WTC11 (cell line): ENCODE measurements at regions of chr11 and their contacts with region 1.

Region 1: GRCh38 chr11:57249384-57250319 is 12.6 kb upstream of the APLNR start:
- DNase-seq: peak; percentile 74
- ATAC-seq: peak; percentile 15; the same call in 1 of the 2 replicates
- H3K4me3 Mint-ChIP-seq: no peak overlapping the region
- H3K27ac Mint-ChIP-seq: no peak overlapping the region
- H3K4me1 Mint-ChIP-seq: no peaks in the 10 kb centered on the region; the same call in 1 of the 2 replicates
- H3K27me3 Mint-ChIP-seq: no peaks in the 10 kb centered on the region
- CTCF ChIP-seq: peak; percentile 85

Region 2: DNA sequence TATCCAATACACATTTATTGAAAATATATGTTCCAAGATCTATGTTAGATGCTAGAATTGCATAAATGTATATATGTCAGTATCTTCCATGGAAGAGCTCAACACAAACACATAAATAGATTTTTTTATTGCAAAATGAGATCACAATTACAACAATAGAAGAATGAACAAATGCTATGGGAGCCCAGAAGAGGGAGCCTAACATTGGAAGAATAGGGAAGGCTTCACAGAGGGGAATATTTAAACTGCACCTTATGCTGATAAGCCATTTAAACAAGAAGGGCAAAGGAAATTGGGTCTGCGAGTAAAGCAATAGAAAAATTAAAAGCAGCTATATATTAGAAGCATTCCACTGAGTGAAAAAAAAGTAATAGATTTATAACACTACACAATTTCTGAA is 164.0 kb before region 1 on chr11:
- CTCF ChIA-PET with region 1: interaction called, 15 read pairs
- POLR2A ChIA-PET with region 1: no interaction called
- DNase-seq: no peak
- ATAC-seq: no peak
- H3K4me3 Mint-ChIP-seq: no peak overlapping the region
- H3K27ac Mint-ChIP-seq: no peak overlapping the region
- H3K4me1 Mint-ChIP-seq: peaks cover 9% of the 10 kb centered on the region
- H3K27me3 Mint-ChIP-seq: no peaks in the 10 kb centered on the region
- CTCF ChIP-seq: no peak

Region 3: GRCh38 chr11:57144075-57144474 is 105.6 kb before region 1 on chr11:
- CTCF ChIA-PET with region 1: interaction called, 363 read pairs
- POLR2A ChIA-PET with region 1: no interaction called
- DNase-seq: no peak
- ATAC-seq: peak; percentile 78
- H3K4me3 Mint-ChIP-seq: no peak overlapping the region
- H3K27ac Mint-ChIP-seq: no peak overlapping the region
- H3K4me1 Mint-ChIP-seq: 0 out of 2 replicates have a peak, but pooled peaks cover 4% of the 10 kb centered on the region
- H3K27me3 Mint-ChIP-seq: no peaks in the 10 kb centered on the region; the same call in 1 of the 2 replicates
- CTCF ChIP-seq: no peak

Region 4: GRCh38 chr11:57180081-57180561 is 69.5 kb before region 1 on chr11:
- CTCF ChIA-PET with region 1: interaction called, 20 read pairs
- POLR2A ChIA-PET with region 1: no interaction called
- DNase-seq: peak; percentile 55
- ATAC-seq: peak; percentile 80
- H3K4me3 Mint-ChIP-seq: peak overlapping the region; percentile 85
- H3K27ac Mint-ChIP-seq: no peak overlapping the region
- H3K4me1 Mint-ChIP-seq: peaks cover 22% of the 10 kb centered on the region
- H3K27me3 Mint-ChIP-seq: peaks cover 44% of the 10 kb centered on the region
- CTCF ChIP-seq: no peak

Region 5: DNA sequence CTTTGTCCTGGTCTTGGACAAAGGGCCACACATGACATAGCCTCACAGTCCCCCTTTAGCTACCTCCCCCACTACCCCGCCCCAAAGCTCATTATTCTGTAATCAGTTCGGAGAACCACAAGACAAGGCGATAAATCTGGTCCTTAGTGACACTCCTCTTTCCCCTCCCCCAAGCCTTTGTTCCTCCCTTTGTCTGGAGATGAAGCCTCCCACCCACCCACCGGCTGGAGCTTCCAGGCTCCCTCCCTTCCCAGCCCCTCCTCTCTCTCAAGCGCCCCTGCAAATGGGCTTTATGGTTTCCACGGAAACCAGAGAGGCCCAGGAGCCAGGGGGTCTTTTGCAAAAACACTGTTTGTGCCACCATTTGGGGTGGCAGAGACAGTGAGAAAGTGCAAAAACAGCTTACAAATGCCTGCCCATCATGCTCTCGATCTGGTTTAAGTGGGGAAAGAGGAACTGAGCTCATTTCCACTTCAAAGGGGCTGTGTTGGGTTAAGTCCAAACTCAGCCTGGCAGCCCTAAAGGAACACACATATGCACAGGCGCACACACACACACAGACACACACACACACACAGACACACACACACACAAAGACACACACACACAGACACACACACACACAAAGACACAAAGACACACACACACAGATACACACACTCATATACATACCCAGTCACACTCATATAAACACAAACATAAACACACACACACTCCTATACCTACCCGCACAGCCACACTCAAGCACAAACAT is 36.1 kb before region 1 on chr11:
- CTCF ChIA-PET with region 1: interaction called, 35 read pairs
- POLR2A ChIA-PET with region 1: interaction called, 3 read pairs
- DNase-seq: peak; percentile 39
- ATAC-seq: peak; percentile 85
- H3K4me3 Mint-ChIP-seq: no peak overlapping the region
- H3K27ac Mint-ChIP-seq: no peak overlapping the region
- H3K4me1 Mint-ChIP-seq: peaks cover 14% of the 10 kb centered on the region
- H3K27me3 Mint-ChIP-seq: no peaks in the 10 kb centered on the region; the same call in 1 of the 2 replicates
- CTCF ChIP-seq: no peak

Region 6: DNA sequence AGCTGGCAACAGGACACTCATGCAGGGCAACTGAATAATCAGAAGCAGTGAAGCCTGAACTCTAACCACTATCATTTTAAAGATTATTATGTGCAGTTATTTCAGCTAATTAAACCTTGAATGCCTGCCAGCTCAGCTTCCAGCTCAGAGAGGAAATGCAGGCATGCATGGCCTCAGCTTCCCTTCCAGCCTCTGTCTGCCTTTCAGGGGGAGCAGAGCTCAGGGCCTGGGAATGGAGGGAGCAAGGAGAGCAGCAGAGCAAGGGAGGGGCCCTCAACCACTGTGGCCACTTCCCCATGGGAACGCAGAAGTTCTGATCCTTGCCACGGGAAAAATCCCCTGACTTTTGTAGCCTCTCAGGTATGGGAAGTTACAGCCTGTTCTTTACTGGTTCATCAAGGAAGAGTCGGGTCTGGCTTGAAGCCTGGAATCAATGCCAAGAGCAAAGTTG is 19.9 kb after region 1 on chr11:
- CTCF ChIA-PET with region 1: interaction called, 18 read pairs
- POLR2A ChIA-PET with region 1: no interaction called
- DNase-seq: no peak
- ATAC-seq: no peak; the same call in 1 of the 2 replicates
- H3K4me3 Mint-ChIP-seq: no peak overlapping the region
- H3K27ac Mint-ChIP-seq: no peak overlapping the region
- H3K4me1 Mint-ChIP-seq: peaks cover 7% of the 10 kb centered on the region; the same call in 1 of the 2 replicates
- H3K27me3 Mint-ChIP-seq: peaks cover 4% of the 10 kb centered on the region
- CTCF ChIP-seq: no peak

Region 7: DNA sequence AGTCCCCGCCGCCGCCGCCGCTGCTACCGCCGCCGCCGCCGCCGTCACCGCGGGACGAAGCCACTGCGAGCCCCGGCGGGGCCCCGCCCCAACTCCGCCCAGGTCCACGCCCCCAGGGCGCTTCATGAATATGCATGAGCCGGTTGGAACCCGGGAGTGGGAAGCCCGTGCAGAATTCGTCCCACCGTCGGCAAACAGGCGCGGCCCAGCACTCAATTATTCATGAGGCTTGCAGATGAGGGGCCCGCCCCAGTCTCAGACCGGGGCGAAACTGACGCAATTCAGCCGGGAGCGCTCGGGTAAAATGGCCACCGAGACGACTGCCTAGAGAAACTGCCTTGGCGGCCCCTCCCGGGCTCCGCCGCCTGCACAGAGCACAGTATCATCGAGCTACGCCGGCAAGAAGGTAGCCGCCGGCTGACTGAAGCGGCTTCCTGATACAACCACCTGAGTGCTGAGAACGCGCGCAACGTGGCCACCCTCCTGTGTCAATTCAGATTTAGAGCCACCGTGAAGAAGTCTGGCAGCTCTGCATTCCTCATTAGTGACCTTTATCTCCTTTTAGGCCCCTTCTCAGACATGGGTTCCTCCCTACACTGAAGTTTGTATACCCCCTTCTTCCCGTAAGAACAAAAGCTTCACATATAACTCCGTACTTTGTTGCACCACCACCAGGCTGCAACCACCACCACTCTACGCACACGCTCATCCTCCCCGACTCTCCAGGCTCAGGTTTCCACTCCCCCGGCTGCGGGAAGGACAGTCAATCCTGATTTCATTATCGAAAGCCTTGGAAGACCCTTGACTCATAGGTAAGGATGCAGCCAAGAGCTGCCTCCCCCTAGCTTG is 75.5 kb after region 1 on chr11 and contains the start of gene TNKS1BP1:
- CTCF ChIA-PET with region 1: interaction called, 12 read pairs
- POLR2A ChIA-PET with region 1: interaction called, 9 read pairs
- DNase-seq: peak; percentile 97
- ATAC-seq: peak; percentile 86
- H3K4me3 Mint-ChIP-seq: peak within 1 kb of the TSS; percentile 88
- H3K27ac Mint-ChIP-seq: peak within 1 kb of the TSS; percentile 100
- H3K4me1 Mint-ChIP-seq: peaks cover 49% of the 10 kb centered on the region
- H3K27me3 Mint-ChIP-seq: no peaks in the 10 kb centered on the region
- CTCF ChIP-seq: no peak
- total RNA-seq, gene TNKS1BP1: 109 to 127 TPM (median 125 TPM) in 3 replicates

Region 8: DNA sequence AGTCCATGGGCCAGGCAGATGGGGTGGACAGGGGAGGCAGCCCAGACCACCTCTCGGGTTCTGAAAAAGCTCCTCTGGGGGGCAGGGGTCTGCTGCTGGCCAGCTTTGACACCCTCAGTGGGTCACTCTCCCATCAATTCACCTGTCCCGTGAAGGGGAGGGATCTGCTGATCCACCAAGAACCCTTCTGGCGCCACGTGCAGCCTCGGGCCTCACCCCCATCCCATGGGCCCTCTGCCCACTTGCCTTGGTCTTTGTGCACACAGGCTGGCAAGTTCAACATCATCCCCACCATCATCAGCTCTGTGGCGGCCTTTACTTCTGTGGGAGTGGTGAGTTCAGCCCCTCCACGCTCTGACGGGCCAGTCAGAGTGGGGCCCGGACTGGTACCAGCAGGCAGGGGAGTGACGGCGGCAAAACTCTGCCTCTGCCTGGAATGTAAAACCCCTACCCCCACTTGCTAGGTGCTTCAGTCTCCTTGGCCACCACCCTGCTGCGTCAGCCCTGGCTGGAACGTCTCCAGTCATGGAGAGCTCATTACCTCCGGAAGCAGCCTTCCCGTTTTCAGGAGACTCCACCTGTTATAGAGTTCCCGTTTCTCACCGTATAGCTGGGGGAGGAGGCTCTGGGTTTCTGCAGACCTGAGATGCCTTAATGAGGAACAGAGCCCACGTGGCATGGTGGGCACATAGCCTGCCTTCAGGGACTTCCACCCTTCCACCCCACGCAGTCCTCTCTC is 118.6 kb after region 1 on chr11:
- CTCF ChIA-PET with region 1: no interaction called
- POLR2A ChIA-PET with region 1: no interaction called
- DNase-seq: no peak
- ATAC-seq: no peak
- H3K4me3 Mint-ChIP-seq: no peak overlapping the region
- H3K27ac Mint-ChIP-seq: peak overlapping the region; percentile 19; the same call in 1 of the 2 replicates
- H3K4me1 Mint-ChIP-seq: peaks cover 24% of the 10 kb centered on the region
- H3K27me3 Mint-ChIP-seq: peaks cover 1% of the 10 kb centered on the region; the same call in 1 of the 2 replicates
- CTCF ChIP-seq: no peak

Region 9: DNA sequence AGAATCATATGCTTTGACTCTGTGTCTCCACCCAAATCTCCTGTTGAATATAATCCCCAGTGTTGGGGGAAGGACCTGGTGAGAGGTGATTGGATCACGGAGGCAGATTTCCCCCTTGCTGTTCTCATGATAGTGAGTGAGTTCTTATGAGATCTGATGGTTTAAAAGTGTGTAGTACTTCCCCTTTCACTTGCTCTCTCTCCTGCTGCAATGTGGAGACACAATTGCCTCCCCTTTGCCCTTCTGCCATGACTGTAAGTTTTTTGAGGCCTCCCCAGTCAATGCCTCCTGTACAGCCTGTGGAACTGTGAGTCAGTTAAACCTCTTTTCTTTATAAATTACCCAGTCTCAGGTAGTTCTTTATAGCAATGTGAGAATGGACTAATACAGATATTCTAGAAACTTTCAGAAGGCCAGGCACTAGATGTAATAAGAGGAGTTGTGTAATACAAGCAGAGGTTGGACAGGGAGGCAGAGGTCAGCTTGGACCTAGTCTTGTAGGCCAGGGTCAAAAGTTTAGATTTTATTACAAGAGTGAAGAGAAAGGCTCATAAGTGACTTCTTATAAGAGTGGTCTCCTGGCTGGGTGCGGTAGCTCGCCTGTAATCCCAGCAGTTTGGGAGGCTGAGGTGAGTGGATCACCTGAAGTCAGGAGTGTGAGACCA is 338.5 kb after region 1 on chr11:
- CTCF ChIA-PET with region 1: no interaction called
- POLR2A ChIA-PET with region 1: no interaction called
- DNase-seq: no peak
- ATAC-seq: no peak
- H3K4me3 Mint-ChIP-seq: no peak overlapping the region
- H3K27ac Mint-ChIP-seq: no peak overlapping the region
- H3K4me1 Mint-ChIP-seq: peaks cover 9% of the 10 kb centered on the region
- H3K27me3 Mint-ChIP-seq: peaks cover 4% of the 10 kb centered on the region
- CTCF ChIP-seq: no peak